H1 (cell line): ENCODE measurements at regions of chr17 and their contacts with region 1.

Region 1: DNA sequence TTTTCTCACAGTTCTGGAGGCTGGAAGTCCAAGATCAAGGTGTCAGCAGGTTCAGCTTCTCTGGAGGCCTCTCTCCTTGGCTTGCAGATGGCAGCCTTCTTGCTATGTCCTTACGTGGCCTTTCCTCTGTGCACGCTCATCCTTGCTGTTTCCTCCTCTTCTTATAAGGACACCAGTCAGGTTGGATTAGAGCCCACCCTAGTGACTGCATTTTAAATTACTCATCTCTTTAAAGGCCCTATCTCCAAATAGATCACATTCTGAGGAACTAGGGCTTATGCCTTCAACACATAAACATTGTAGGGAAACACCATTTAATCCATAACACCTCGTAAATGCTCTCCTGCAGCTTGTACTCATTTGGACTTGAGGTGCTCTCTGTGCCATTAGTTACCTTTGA is 36.3 kb downstream of the DHRS7C start:
- DNase-seq: no peak
- H3K4me3 ChIP-seq: no peak overlapping the region
- H3K27ac ChIP-seq: no peak overlapping the region
- H3K4me1 ChIP-seq: no peaks in the 10 kb centered on the region
- H3K27me3 ChIP-seq: no peaks in the 10 kb centered on the region
- CTCF ChIP-seq: no peak
- EP300 ChIP-seq: no peak
- POLR2A ChIP-seq: no peak
- RAD21 ChIP-seq: 0 out of 4 replicates have a peak, but pooled peaks have one; percentile 5 to 13

Region 2: DNA sequence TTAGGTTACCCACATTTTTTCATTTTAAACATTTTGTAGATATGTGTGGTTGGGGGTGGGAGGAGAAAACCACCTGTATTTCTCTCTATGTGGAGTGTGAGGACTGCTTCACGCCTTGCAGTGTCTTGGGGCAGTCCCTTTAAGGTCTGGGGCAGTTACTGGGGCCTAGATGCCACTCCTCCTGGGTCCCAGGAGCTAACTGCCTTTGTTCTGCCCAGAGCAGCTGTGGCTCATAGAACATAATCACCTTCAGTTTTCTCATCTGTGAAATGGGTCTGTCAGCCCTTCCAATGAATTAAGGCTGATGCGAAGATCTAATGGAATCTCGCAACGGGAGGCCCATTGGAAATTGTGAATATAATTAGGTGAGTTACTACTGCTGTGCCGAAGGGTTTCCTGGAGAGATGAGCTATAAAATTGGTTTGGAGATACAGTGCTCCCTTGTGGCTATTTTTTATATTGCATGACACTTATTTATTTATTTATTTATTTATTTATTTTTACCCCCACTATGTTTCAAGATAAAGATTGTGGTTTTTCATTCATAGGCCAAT is 13.4 kb after region 1 on chr17:
- CTCF ChIA-PET with region 1: interaction called, 13 read pairs
- POLR2A ChIA-PET with region 1: no interaction called
- DNase-seq: no peak
- H3K4me3 ChIP-seq: no peak overlapping the region
- H3K27ac ChIP-seq: no peak overlapping the region
- H3K4me1 ChIP-seq: no peaks in the 10 kb centered on the region; a peak in 1 of 7 replicates
- H3K27me3 ChIP-seq: no peaks in the 10 kb centered on the region
- CTCF ChIP-seq: peak in 1 of 3 experiments; percentile 38; a peak in 1 of 4 replicates
- EP300 ChIP-seq: no peak
- POLR2A ChIP-seq: no peak
- RAD21 ChIP-seq: peak; percentile 48 to 50

Region 3: GRCh38 chr17:9783012-9783411 is 27.9 kb after region 1 on chr17:
- CTCF ChIA-PET with region 1: no interaction called
- POLR2A ChIA-PET with region 1: no interaction called
- DNase-seq: no peak
- H3K4me3 ChIP-seq: no peak overlapping the region
- H3K27ac ChIP-seq: no peak overlapping the region
- H3K4me1 ChIP-seq: no peaks in the 10 kb centered on the region
- H3K27me3 ChIP-seq: no peaks in the 10 kb centered on the region
- CTCF ChIP-seq: no peak
- EP300 ChIP-seq: no peak
- POLR2A ChIP-seq: no peak
- RAD21 ChIP-seq: no peak